HCT116 (cell line): ENCODE measurements at regions of chr17 and their contacts with region 1.

Region 1: GRCh38 chr17:73657473-73658116 is 13.3 kb upstream of the SDK2 start:
- DNase-seq: peak; percentile 57
- ATAC-seq: peak; percentile 100
- H3K4me3 ChIP-seq: no peak overlapping the region
- H3K27ac ChIP-seq: no peak overlapping the region
- H3K4me1 ChIP-seq: peaks cover 0 to 4% of the 10 kb centered on the region in 2 experiments; a peak in 3 of 4 replicates
- H3K27me3 ChIP-seq: peaks cover 14% of the 10 kb centered on the region
- CTCF ChIP-seq: peak; percentile 86 to 91 (median 87)
- POLR2A ChIP-seq: no peak
- RAD21 ChIP-seq: peak; percentile 65

Region 2: DNA sequence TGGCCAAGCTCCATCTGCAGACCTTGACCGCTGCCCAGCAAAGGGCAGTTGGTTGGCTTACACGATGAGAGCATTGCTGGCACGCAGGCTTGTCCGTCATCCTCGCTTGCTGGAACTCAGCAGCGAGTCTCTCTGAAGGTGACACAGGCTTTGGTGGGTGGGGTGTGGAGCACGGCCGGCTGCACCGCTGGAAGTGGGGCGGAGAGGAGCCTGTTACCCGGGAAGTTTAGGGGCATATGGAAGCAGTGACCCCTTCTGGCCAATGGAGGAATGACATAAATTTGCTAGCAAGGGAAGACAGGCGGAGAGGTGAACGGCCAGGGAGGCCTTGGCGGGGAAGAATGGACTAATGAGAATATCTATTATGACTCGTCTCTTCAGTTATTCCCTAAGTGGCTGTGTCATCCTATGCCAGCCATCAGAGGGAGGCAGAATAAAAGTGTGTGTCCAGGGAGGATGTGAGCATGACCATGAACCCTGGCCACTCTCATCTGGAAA is 52.5 kb after region 1 on chr17:
- CTCF ChIA-PET with region 1: no interaction called
- POLR2A ChIA-PET with region 1: no interaction called
- RAD21 ChIA-PET with region 1: no interaction called
- intact Hi-C with region 1: loop called (anchors 1 kb)
- DNase-seq: peak; percentile 67
- ATAC-seq: peak; percentile 94
- H3K4me3 ChIP-seq: no peak overlapping the region
- H3K27ac ChIP-seq: no peak overlapping the region
- H3K4me1 ChIP-seq: peaks cover 0 to 5% of the 10 kb centered on the region in 2 experiments; a peak in 1 of 4 replicates
- H3K27me3 ChIP-seq: peaks cover 55% of the 10 kb centered on the region
- CTCF ChIP-seq: peak; percentile 83 to 94 (median 90)
- POLR2A ChIP-seq: no peak
- RAD21 ChIP-seq: peak; percentile 90

Region 3: GRCh38 chr17:73782641-73783381 is 125.2 kb after region 1 on chr17:
- CTCF ChIA-PET with region 1: interaction called, 3 read pairs
- POLR2A ChIA-PET with region 1: no interaction called
- RAD21 ChIA-PET with region 1: no interaction called
- intact Hi-C with region 1: loop called (anchors 1 kb)
- DNase-seq: peak; percentile 74
- ATAC-seq: peak; percentile 87
- H3K4me3 ChIP-seq: no peak overlapping the region
- H3K27ac ChIP-seq: no peak overlapping the region
- H3K4me1 ChIP-seq: peaks cover 0 to 8% of the 10 kb centered on the region in 2 experiments; a peak in 2 of 4 replicates
- H3K27me3 ChIP-seq: peaks cover 61% of the 10 kb centered on the region; the same call in 1 of the 2 replicates
- CTCF ChIP-seq: peak; percentile 73 to 96 (median 91)
- POLR2A ChIP-seq: no peak
- RAD21 ChIP-seq: peak; percentile 86

Region 4: DNA sequence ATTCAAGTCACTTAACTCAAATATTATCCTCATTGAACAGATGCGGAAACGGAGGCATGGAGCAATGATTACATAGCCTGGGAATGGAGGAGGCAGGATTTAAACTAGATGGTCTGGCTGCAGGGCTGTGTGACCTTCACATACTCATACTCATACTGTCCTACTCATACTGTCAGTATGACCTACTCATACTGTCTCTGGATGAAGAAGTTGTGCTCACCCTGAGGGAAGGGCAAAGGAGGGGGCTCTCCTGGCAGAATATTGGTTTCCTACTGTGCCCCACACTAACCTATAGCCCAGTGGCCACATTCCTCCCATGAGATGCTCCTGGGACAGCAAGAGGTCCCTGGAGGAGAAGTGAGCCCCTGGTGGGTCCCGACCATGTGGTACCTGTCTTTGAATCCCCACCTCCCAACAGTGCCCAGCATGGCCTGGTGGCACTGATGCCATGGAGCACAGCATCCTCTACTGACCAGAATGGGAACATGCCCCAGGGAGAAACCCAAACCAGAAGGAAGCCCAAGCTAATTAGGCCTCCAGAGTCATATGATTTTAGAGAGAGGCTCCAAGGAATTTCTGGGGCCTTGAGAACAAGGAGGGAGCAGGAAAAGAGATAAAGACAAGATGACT is 184.0 kb after region 1 on chr17:
- CTCF ChIA-PET with region 1: interaction called, 7 read pairs
- POLR2A ChIA-PET with region 1: no interaction called
- RAD21 ChIA-PET with region 1: interaction called in 1 of 2 experiments, 4 read pairs
- intact Hi-C with region 1: loop called (anchors 1 kb)
- DNase-seq: no peak
- ATAC-seq: peak; percentile 90
- H3K4me3 ChIP-seq: no peak overlapping the region
- H3K27ac ChIP-seq: no peak overlapping the region
- H3K4me1 ChIP-seq: no peaks in the 10 kb centered on the region
- H3K27me3 ChIP-seq: peaks cover 14% of the 10 kb centered on the region
- CTCF ChIP-seq: peak; percentile 62 to 95 (median 84); a peak in 5 of 6 replicates
- POLR2A ChIP-seq: no peak
- RAD21 ChIP-seq: peak; percentile 86

Region 5: GRCh38 chr17:73956669-73957465 is 299.3 kb after region 1 on chr17:
- CTCF ChIA-PET with region 1: no interaction called
- POLR2A ChIA-PET with region 1: no interaction called
- RAD21 ChIA-PET with region 1: no interaction called
- intact Hi-C with region 1: loop called (anchors 1 kb)
- DNase-seq: peak; percentile 49
- ATAC-seq: peak; percentile 97
- H3K4me3 ChIP-seq: no peak overlapping the region
- H3K27ac ChIP-seq: no peak overlapping the region
- H3K4me1 ChIP-seq: no peaks in the 10 kb centered on the region
- H3K27me3 ChIP-seq: peaks cover 7% of the 10 kb centered on the region; the same call in 1 of the 2 replicates
- CTCF ChIP-seq: peak; percentile 56 to 95 (median 87); a peak in 5 of 6 replicates
- POLR2A ChIP-seq: no peak
- RAD21 ChIP-seq: peak; percentile 84

Region 6: DNA sequence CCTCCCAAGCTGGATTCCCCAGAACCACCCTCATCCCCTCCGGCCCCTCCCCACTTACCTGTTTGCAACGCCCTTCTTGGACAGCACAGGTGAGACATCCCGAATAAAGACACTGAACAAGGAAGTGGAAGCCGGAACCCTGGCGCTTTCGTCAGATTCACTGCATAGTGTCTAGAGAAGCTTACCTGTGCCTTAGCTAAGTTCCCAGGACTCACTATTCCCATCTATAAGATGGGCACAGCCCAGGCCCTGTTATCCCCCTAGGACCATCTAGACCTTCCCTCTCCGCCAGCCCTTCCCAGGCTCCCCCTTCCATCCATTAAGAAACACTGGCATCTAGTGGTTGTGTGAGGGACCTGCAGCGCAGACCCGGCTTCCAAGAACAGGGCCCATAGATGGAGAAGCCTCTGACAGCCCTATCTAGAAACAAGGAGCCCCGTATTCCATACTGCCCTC is 519.0 kb after region 1 on chr17:
- CTCF ChIA-PET with region 1: no interaction called
- POLR2A ChIA-PET with region 1: no interaction called
- RAD21 ChIA-PET with region 1: no interaction called
- intact Hi-C with region 1: loop called (anchors 1 kb)
- DNase-seq: peak; percentile 56
- ATAC-seq: peak; percentile 97
- H3K4me3 ChIP-seq: no peak overlapping the region
- H3K27ac ChIP-seq: no peak overlapping the region
- H3K4me1 ChIP-seq: no peaks in the 10 kb centered on the region
- H3K27me3 ChIP-seq: peaks cover 38% of the 10 kb centered on the region; the same call in 1 of the 2 replicates
- CTCF ChIP-seq: peak; percentile 89 to 99 (median 97)
- POLR2A ChIP-seq: no peak
- RAD21 ChIP-seq: peak; percentile 98